ENCODE measurements at regions of chr2 and their contacts with region 1.

Region 1: GRCh38 chr2:43484323-43484930 is 111.4 kb downstream of the THADA start:
- DNase-seq: no peak
- H3K4me3 ChIP-seq: no peak overlapping the region
- H3K27ac ChIP-seq: no peak overlapping the region
- H3K4me1 ChIP-seq: no peaks in the 10 kb centered on the region
- H3K27me3 ChIP-seq: no peaks in the 10 kb centered on the region
- CTCF ChIP-seq: peak; percentile 64

Region 2: GRCh38 chr2:42828487-42829425 is 655.7 kb before region 1 on chr2:
- intact Hi-C with region 1: loop called (anchors 5 kb)
- DNase-seq: peak; percentile 75
- H3K4me3 ChIP-seq: no peak overlapping the region
- H3K27ac ChIP-seq: no peak overlapping the region
- H3K4me1 ChIP-seq: peaks cover 7% of the 10 kb centered on the region
- H3K27me3 ChIP-seq: no peaks in the 10 kb centered on the region
- CTCF ChIP-seq: peak; percentile 90

Region 3: DNA sequence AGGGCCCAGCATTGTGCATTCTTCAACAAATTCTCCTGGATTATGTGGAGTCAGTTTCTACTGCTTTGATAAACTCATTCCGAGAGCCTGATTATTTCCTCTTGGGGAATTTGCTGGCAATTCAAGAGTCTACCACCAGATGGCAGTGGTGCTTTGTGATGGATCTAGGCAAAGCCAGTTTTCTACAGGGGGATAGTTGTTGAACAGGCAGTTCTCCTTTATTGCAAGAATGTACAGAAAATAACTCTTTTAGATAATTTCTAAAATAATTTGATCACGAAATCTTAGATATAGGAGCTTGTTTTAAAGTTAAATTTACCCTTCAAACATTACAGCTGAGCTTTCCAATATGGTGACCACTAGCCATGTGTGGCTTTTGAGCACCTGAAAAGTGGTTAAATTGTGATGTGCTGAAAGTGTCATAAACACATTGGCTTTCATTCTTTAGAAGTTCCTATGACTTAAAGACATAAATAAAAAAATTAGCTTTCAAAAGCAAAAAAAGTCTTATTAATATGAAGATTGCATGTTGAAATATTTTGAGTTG is 625.3 kb before region 1 on chr2:
- intact Hi-C with region 1: loop called (anchors 10 kb)
- DNase-seq: peak; percentile 92
- H3K4me3 ChIP-seq: no peak overlapping the region
- H3K27ac ChIP-seq: no peak overlapping the region
- H3K4me1 ChIP-seq: no peaks in the 10 kb centered on the region
- H3K27me3 ChIP-seq: no peaks in the 10 kb centered on the region
- CTCF ChIP-seq: peak; percentile 93

Region 4: GRCh38 chr2:42944779-42945415 is 539.5 kb before region 1 on chr2:
- intact Hi-C with region 1: loop called (anchors 10 kb)
- DNase-seq: no peak
- H3K4me3 ChIP-seq: no peak overlapping the region
- H3K27ac ChIP-seq: no peak overlapping the region
- H3K4me1 ChIP-seq: no peaks in the 10 kb centered on the region
- H3K27me3 ChIP-seq: no peaks in the 10 kb centered on the region
- CTCF ChIP-seq: no peak

Region 5: GRCh38 chr2:43131024-43131889 is 353.2 kb before region 1 on chr2:
- intact Hi-C with region 1: loop called (anchors 5 kb)
- DNase-seq: peak; percentile 85
- H3K4me3 ChIP-seq: no peak overlapping the region
- H3K27ac ChIP-seq: peak overlapping the region; percentile 63
- H3K4me1 ChIP-seq: peaks cover 36% of the 10 kb centered on the region
- H3K27me3 ChIP-seq: no peaks in the 10 kb centered on the region
- CTCF ChIP-seq: peak; percentile 33

Region 6: GRCh38 chr2:43233218-43234212 is 250.9 kb before region 1 on chr2:
- intact Hi-C with region 1: loop called (anchors 5 kb)
- DNase-seq: no peak
- H3K4me3 ChIP-seq: no peak overlapping the region
- H3K27ac ChIP-seq: no peak overlapping the region
- H3K4me1 ChIP-seq: peaks cover 8% of the 10 kb centered on the region
- H3K27me3 ChIP-seq: no peaks in the 10 kb centered on the region
- CTCF ChIP-seq: no peak